ENCODE measurements at regions of chr11 and their contacts with region 1.

Region 1: DNA sequence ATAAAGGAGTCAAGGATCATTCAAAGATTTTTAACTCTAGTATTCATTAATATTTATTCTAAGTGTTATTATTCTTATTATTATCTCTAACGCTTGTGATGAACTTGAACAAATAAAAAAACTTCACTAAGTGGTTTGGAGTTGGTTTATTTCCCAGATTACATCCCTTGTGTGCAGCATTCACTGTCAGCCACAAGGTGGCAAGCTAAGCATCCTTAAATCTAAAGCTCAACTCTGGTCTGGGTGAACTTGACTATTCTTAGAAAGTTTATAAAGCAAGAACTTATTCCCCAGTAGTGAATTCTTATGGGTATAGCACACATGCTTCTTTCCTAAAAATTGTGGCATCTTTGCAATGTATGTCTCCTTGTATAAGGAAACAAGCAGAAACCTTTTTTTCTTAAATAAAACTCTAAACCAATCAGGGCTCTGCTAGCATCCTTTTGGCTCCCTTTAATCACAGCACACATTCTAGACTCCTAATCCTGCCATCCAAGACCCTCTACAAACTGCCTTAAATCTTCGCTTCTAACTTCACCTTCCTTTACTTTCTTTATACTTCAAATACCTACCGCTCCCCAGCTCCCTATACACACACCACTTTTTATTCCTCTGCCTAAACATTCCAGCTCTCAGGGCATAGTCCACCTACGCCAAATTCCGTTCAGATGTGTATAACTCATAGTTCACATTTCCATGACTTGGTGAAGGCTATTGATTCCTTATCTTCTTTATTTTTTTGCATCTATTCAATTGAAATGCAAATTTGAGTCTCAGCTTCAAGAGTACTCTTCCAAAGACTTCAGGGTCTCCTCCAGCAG is 1068.8 kb downstream of the DLG2 start:
- DNase-seq: peak; percentile 76
- H3K4me3 ChIP-seq: no peak overlapping the region
- H3K27ac ChIP-seq: no peak overlapping the region
- H3K4me1 ChIP-seq: no peaks in the 10 kb centered on the region
- H3K27me3 ChIP-seq: peaks cover 8% of the 10 kb centered on the region; the same call in 1 of the 2 replicates

Region 2: GRCh38 chr11:83836883-83837654 is 721.2 kb before region 1 on chr11:
- in situ Hi-C with region 1: loop called (anchors 25 kb)
- DNase-seq: peak; percentile 74
- H3K4me3 ChIP-seq: no peak overlapping the region
- H3K27ac ChIP-seq: no peak overlapping the region
- H3K4me1 ChIP-seq: no peaks in the 10 kb centered on the region
- H3K27me3 ChIP-seq: peaks cover 33% of the 10 kb centered on the region

Region 3: DNA sequence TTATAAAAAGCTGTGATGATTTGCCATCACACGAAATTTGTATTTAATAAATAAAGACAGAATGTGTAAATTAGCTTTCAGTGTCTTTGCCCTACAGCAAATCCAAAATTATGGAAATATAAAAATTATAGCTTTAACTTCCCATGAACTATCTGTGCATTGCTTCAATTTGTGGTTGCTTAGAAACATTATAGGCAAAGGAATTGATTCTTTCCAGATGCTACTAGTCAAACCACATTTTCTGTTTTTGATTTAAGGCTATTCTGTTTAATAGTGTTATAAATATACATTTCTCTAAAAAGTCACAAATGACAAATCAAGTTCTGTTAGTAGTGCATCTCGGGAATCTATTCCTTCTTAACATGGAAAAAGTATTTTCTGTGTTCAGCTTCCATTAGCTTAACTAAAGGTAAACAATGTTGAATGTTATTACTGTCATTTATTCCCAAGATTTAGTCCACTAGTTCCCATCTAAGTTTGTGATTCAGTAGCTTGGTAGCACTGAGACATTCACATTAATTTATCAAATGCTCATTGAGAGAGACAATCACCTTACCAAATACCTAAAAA is 185.8 kb before region 1 on chr11:
- in situ Hi-C with region 1: no loop called
- DNase-seq: no peak
- H3K4me3 ChIP-seq: no peak overlapping the region
- H3K27ac ChIP-seq: no peak overlapping the region
- H3K4me1 ChIP-seq: no peaks in the 10 kb centered on the region
- H3K27me3 ChIP-seq: no peaks in the 10 kb centered on the region

Region 4: DNA sequence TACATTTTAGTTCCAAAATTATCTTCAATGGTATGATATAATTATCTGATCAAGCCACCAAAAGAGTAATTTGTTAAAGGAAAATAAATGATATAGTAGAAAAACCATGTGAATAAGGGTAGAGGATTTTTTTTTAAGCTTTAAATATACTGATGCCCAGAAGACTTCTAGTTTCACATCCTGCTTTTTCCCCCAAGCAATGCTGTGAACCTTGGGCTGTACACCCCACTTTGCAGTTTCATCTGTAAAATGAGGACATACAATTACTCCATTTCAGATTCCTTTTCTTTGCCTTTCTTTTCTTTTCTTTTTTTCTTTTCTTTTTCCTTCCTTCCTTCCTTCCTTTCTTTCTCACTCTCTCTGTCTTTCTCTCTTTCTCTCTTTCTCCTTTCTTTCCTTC is 56.5 kb before region 1 on chr11:
- in situ Hi-C with region 1: no loop called
- DNase-seq: no peak
- H3K4me3 ChIP-seq: no peak overlapping the region
- H3K27ac ChIP-seq: no peak overlapping the region
- H3K4me1 ChIP-seq: peaks cover 26% of the 10 kb centered on the region
- H3K27me3 ChIP-seq: no peaks in the 10 kb centered on the region

Region 5: DNA sequence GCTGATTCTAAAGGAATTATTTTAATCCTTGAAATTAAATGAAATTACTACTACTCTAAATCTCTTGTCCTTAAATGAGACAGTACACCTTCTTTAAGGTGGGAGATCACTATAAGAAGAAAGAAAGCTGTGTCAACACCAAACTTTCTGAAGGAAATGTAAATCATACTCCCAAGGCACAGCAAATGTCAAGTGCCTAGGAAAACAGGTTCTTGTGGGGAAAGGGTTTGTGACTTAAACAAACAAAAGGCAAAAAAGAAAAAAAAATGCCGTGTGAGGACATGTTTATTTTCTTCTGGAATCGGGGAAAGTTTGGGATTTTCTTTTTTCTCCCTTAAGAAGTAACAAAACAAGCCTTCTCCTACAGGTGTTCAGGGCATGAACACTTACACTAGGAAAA is 323.8 kb after region 1 on chr11:
- in situ Hi-C with region 1: no loop called
- DNase-seq: no peak
- H3K4me3 ChIP-seq: no peak overlapping the region
- H3K27ac ChIP-seq: no peak overlapping the region
- H3K4me1 ChIP-seq: peaks cover 13% of the 10 kb centered on the region
- H3K27me3 ChIP-seq: no peaks in the 10 kb centered on the region

Measured in GM23248 (cell line).